ENCODE measurements at regions of chr2 and their contacts with region 1.

Region 1: DNA sequence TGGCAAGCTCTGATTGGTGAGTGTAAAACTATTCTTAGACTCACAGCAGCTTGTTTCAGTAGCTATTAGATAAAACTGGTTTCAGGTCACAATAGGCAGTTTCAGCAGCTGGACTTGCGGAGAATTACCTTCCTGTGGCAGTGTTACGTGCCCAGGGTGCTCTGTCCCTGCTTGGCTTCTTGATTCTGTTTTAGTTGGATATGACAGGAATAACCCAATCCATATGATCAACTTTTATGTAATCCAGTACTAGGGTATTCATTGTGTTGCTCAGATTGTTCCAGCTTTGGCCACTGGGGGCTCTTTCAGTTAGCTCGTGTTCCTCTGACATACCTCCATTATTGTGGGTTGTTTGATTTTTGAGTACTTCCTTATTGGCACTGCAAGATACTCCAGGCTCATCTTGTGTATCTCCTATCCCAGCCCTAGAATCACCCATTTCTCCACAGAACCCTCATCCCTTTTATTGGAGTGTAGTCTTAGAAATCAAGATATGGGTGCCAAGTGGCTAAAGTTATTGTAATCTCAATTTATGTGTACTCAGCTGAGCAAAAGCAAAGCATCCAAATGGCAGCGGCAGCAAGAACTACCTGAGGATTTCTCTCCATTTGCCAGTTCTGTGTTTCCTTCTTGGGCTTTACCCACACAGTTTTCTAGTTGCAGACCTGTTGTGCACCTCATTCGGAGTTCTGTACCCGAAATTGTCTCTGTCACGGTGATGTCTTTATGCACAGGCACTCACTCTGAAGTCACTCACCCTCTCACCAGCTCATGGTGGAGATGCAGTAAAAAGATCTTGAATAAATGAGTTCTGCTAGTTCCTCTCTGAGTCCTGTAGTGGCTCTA is 43.4 kb downstream of the INPP4A start:
- DNase-seq: peak; percentile 55
- CTCF ChIP-seq: peak; percentile 25

Region 2: GRCh38 chr2:98149333-98149697 is 338.7 kb before region 1 on chr2:
- CTCF ChIA-PET with region 1: no interaction called
- POLR2A ChIA-PET with region 1: no interaction called
- DNase-seq: no peak
- CTCF ChIP-seq: no peak

Region 3: GRCh38 chr2:98465456-98466226 is 22.4 kb before region 1 on chr2:
- CTCF ChIA-PET with region 1: interaction called, 32 read pairs
- POLR2A ChIA-PET with region 1: interaction called, 18 read pairs
- DNase-seq: no peak
- CTCF ChIP-seq: no peak

Region 4: GRCh38 chr2:98498703-98499440 is 10.8 kb after region 1 on chr2:
- CTCF ChIA-PET with region 1: interaction called, 26 read pairs
- POLR2A ChIA-PET with region 1: no interaction called
- DNase-seq: no peak
- CTCF ChIP-seq: no peak

Region 5: DNA sequence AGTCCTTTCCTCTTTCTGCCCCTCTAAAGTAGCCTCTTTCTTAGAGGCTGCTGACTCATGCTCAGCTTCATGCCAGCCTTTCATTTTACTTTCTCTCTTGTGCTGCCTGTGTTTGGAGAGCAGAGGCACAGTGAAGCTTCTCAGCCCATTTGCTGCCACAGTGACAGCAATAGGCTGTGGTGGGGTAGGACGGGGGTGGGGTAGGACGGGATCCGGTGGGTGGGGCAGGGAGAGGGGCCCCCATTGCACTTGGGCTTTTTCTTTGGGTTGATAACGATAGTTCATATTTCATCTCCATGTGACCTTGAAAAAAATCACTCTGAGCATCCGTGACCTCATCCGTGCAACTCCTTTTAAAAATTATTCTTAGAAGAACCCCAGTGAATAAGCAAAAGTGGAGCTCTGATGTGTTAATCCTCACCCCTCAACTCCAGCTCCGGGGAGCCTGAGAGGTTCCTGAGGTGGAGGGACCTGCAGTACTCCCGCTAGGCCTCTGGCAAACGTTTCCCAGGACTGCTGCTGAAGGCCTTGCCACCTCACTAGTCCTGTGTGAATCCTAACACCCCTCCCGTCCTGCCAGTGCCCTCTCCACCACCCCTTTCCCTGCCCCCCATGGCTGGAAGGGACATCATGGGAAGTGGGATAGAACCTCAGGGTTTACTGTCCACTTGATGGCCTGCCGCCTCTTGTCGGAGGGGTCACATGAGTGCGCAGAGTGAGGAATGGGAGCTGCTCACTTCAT is 27.4 kb after region 1 on chr2:
- CTCF ChIA-PET with region 1: interaction called, 10 read pairs
- POLR2A ChIA-PET with region 1: no interaction called
- DNase-seq: no peak
- CTCF ChIP-seq: no peak

Region 6: DNA sequence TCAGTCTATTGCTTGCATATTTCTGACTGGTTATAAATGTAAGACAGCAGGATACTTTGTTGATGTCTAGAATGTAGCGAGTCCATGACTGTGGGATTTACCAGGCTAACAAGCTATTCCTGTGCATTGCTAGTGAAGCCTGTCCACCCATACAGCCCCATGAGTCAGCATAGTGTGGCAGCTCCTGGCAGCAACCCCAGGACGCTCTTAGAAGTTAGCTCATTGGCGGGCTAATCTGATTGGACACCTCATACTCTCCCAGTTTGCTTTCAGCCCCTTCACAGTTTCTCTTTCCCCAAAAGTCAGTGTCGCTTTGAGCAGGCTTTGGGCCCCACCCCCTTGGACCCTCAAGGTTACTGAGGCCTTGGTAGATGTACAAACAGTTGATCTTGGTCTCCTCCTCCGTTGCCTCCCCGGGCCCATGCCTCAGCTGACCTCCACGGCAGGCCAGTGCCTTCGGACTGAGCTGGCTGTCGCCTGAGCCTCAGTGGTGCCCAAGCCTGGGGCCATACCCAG is 72.3 kb after region 1 on chr2:
- CTCF ChIA-PET with region 1: interaction called, 10 read pairs
- POLR2A ChIA-PET with region 1: no interaction called
- DNase-seq: no peak
- CTCF ChIP-seq: no peak